ENCODE measurements at regions of chr22 and their contacts with region 1.

Region 1: DNA sequence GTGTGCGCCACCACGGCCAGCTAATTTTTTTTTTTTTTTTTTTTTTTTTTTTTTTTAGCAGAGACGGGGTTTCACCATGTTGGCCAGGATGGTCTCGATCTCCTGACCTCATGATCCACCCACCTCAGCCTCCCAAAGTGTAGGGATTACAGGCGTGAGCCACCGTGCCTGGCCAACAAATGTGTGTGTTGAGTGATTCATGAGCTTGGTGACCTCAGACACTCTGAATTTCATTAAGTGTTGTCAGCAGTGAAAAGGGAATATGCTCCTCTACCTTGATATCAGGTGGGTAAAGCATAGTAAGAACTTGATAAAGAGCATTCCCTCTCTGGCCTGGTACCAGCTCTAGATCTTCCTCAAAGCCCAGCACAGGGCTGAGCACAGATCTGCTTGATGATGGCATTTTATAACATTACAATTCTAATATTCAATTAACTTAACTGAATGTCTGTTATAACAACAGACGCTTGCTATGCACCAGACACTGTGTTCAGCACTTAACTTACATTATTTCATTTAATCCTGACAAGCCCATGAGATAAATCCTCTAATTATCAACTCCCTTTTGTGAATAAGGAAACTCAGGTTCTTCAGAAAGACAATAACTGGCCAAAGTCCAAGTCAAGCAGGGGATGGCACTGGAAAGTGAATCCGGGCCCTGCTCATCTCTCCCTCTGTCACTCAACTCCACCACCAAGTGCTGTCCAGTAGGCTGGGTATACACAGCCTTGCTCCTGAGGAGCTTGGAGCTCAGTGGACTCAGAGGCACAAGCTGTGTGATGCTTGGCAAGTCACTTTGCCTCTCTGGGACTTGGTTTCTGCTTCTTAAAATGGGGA is 13.0 kb downstream of the TBC1D10A start:
- DNase-seq: peak; percentile 49
- ATAC-seq: no peak; the same call in 1 of the 2 replicates
- H3K4me3 ChIP-seq: no peak overlapping the region
- H3K27ac ChIP-seq: peak overlapping the region; percentile 35
- H3K4me1 ChIP-seq: peaks cover 45% of the 10 kb centered on the region
- H3K27me3 ChIP-seq: no peaks in the 10 kb centered on the region
- CTCF ChIP-seq: no peak

Region 2: DNA sequence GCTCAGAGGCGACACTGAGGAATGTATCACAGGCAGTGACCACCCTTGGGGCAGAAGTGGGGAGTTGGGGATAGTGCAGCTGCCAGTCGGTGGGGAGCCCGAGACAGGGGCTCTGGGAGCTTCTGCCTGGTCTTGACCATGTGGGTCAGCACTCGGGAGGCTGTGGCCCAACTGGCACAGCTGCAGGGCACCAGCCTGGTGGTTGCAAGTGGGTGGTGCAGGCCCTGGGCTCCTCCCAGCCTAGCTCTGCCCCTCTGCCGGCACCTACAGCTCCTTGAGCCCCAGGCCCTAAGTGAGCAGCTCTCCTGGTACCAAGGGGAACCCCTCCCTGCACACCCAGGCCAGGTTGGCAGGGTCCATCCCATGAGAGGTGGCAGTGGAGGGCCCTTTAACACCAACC is 985.7 kb before region 1 on chr22:
- CTCF ChIA-PET with region 1: no interaction called
- POLR2A ChIA-PET with region 1: interaction called, 31 read pairs
- intact Hi-C with region 1: no loop called
- DNase-seq: no peak
- ATAC-seq: no peak
- H3K4me3 ChIP-seq: no peak overlapping the region
- H3K27ac ChIP-seq: no peak overlapping the region
- H3K4me1 ChIP-seq: no peaks in the 10 kb centered on the region
- H3K27me3 ChIP-seq: no peaks in the 10 kb centered on the region
- CTCF ChIP-seq: no peak

Measured in PC-3 (cell line).